Caco-2 (cell line): ENCODE measurements at regions of chr7 and their contacts with region 1.

Region 1: GRCh38 chr7:1503816-1504775 is at the start of gene INTS1:
- DNase-seq: peak; percentile 94 to 96
- H3K4me3 ChIP-seq: peak within 1 kb of the TSS; percentile 100
- H3K4me3 Mint-ChIP-seq: peak within 1 kb of the TSS; percentile 88
- H3K27ac Mint-ChIP-seq: peak within 1 kb of the TSS; percentile 91
- H3K4me1 ChIP-seq: peaks cover 21% of the 10 kb centered on the region
- H3K4me1 Mint-ChIP-seq: peaks cover 10% of the 10 kb centered on the region
- H3K27me3 ChIP-seq: no peaks in the 10 kb centered on the region
- H3K27me3 Mint-ChIP-seq: no peaks in the 10 kb centered on the region
- CTCF ChIP-seq: peak; percentile 85 to 93
- total RNA-seq, gene INTS1: 122 and 124 TPM in 2 replicates

Region 2: DNA sequence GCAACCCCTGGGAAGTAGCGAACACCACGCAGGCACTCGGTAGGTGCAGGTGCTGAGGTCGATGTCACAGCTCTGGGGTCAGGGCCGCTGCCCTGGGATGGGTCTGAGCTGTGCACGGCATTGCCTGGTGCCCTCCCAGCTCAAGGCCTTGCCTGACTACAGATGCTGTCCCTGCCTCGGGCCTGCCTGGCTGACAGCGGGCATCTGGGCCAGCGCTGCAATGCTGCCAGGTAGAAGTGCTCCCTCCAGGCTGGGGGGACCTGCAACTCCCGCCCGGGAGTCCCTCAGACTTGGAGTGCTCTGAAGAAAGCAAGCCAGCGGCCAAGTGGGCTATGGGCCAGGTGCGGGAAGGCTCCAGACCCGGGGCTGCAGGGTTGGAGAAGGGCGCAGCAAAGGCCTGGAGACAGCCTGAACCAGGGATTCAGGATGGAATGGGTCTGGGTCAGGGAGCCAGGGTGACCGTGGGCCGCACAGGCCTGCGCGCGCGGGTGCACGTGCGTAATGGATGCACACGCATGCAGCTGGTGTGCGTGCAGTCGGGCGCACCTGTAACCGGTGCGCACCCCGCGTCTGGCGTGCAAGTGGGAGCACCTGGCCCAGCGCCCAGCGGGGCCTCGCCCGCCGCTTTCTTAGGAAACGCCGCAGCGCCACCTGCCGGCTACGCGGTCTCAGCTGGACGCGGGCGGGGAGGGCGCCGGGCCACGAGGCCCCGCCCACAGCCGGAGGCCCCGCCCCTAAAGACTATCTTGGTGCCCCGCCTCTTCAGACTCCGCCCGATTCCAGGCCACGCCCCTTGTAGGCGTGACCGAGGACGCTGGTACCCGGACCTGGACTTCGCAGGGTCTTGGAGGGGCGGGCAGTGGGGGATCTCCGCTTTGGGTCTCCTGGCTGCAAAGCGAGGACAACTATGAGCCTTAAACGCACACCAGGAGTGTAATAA is 91.5 kb before region 1 on chr7:
- CTCF ChIA-PET with region 1: no interaction called
- POLR2A ChIA-PET with region 1: no interaction called
- intact Hi-C with region 1: no loop called
- DNase-seq: peak; percentile 83 to 92
- H3K4me3 ChIP-seq: no peak overlapping the region
- H3K4me3 Mint-ChIP-seq: peak overlapping the region; percentile 19
- H3K27ac Mint-ChIP-seq: no peak overlapping the region
- H3K4me1 ChIP-seq: no peaks in the 10 kb centered on the region
- H3K4me1 Mint-ChIP-seq: no peaks in the 10 kb centered on the region
- H3K27me3 ChIP-seq: no peaks in the 10 kb centered on the region
- H3K27me3 Mint-ChIP-seq: peaks cover 3% of the 10 kb centered on the region
- CTCF ChIP-seq: peak; percentile 65 to 71

Region 3: GRCh38 chr7:1532483-1533424 is 28.7 kb after region 1 on chr7:
- CTCF ChIA-PET with region 1: no interaction called
- POLR2A ChIA-PET with region 1: no interaction called
- intact Hi-C with region 1: loop called (anchors 1 kb)
- DNase-seq: peak in 1 of 2 experiments; percentile 50
- H3K4me3 ChIP-seq: peak overlapping the region; percentile 71
- H3K4me3 Mint-ChIP-seq: peak overlapping the region; percentile 92
- H3K27ac Mint-ChIP-seq: peak overlapping the region; percentile 95
- H3K4me1 ChIP-seq: peaks cover 53% of the 10 kb centered on the region
- H3K4me1 Mint-ChIP-seq: peaks cover 11% of the 10 kb centered on the region
- H3K27me3 ChIP-seq: no peaks in the 10 kb centered on the region
- H3K27me3 Mint-ChIP-seq: no peaks in the 10 kb centered on the region
- CTCF ChIP-seq: no peak